Mucosa of descending colon (tissue), 3 donors: ENCODE measurements at regions of chr10 and their contacts with region 1.

Region 1: GRCh38 chr10:90751107-90751997 is 106.5 kb downstream of the HTR7 start:
- DNase-seq: peak in 1 of 3 donors; percentile 59
- ATAC-seq: peak; percentile 61
- H3K4me3 ChIP-seq: no peak overlapping the region
- H3K4me1 ChIP-seq: no peaks in the 10 kb centered on the region
- CTCF ChIP-seq: peak; percentile 27

Region 2: DNA sequence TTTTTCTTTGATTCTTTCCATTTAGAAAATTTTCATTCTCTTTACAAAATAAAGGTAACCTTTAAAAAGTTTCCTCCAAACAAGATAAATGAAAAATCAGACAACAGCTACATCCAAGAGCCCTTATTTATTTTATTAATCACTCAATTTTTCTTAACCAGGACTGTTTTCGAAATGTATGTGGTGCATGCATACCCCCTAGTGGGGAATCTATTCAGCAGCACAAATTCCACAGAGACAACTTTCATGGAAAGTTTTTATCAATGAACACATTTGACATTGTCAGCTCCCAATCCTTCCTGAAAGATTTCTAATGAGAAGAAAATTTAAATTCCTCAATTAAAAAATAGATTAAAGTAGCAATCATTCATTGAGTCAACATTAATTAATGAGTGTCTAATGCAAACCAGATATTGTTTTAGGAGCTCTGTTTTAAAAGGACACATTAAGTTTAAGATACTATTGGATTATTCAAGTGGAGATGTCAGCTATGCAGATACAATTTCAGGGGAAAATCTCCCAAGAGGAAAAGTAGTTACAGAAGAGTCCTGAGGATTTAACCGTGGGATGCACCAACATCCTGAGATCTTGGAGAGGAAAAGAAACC is 111.7 kb after region 1 on chr10:
- intact Hi-C with region 1: loop called in 1 of 2 experiments (anchors 10 kb)
- DNase-seq: no peak
- ATAC-seq: no peak
- H3K4me3 ChIP-seq: no peak overlapping the region
- H3K4me1 ChIP-seq: no peaks in the 10 kb centered on the region
- CTCF ChIP-seq: peak; percentile 12

Region 3: DNA sequence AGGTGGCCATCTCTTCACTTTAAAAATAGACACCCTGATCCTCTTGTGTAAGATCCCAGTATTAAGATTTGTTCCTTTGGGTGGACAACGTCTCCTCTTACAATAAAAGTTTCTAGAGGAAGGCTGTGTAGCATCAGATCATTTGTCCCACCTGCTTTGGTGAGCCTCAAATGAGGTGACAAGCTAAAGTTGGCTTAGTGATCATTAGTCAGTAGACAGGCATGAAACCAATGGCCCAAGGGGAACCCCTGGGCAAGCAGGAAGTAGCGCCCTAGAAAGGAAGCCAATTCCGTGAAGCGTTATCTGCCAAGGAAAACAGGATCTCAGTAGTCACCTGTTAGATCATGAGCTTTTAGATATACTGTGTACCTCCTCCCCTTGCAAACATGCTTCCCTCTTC is 535.9 kb after region 1 on chr10:
- intact Hi-C with region 1: no loop called
- DNase-seq: no peak
- ATAC-seq: peak; percentile 21
- H3K4me3 ChIP-seq: no peak overlapping the region
- H3K4me1 ChIP-seq: no peaks in the 10 kb centered on the region
- CTCF ChIP-seq: no peak